Motor neuron (in vitro differentiated cells): ENCODE measurements at regions of chr10 and their contacts with region 1.

Region 1: DNA sequence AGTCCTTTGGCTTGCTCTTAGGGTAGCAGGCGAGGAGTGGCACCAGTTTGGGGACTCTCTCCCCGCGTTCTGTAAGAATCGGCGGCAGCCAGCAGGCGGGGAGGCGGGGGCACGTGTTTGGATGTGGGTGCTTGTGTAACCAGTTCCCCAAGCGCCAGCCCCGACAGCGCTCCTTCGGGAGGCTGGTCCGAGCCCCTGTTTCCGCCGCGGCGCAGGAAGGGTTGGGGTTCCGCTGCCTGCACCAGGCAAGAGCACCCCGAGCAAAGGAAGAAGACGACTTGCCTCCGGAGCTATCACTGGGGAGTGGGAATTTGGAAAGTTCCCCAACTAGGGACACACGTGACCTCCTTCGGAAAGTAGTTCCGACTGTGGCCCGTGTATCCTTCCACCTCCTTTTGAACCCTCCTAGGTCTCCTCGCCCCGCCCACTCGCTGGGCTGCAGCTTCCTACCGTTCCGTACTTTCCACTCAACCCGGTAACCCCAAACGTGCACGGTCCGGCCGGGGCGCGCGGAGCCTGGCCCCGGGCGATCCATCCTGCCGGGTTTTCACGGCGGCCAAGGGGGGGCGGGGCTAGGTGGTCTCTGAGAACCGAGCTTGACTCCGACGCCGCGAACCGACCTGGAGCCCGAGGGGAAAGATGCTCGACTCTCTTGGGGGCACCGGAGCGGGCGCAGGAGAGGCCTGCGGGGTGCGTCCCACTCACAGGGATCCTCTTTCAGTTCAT is 1.2 kb downstream of the KLLN start:
- ATAC-seq: peak; percentile 51 to 65 (median 54)
- H3K4me3 ChIP-seq: peak overlapping the region; percentile 79 to 95 (median 90)
- H3K27ac ChIP-seq: peak overlapping the region; percentile 86 to 95
- H3K4me1 ChIP-seq: peaks cover 0 to 5% of the 10 kb centered on the region in 2 donors

Region 2: DNA sequence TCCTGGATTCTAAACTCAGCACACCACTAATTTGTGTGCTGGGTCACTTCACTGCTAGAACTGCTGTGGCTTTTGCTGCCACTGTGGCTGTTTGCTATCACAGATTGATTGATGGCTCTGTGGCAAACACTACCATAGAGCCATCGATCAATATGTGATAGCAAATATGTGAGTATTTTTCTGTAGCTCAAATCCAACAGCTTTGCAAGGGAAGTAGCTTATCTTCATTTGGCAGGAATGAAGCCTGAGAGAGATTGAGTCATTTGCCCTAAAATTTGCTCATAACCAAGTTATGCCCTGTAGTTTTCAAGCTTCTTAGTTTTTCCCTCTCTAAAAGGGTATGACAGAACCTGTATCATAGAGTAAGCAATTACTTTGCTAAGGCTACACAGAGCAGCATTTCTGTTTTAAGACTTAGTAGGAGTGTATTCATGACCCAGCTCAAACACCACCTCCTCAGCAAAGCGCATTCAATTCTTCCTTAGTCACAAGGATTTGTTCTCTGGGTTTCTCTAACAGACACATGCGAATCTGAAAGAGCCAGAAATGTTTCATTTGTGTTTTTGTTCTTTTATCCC is 314.3 kb before region 1 on chr10:
- in situ Hi-C with region 1: no loop called
- ATAC-seq: no peak
- H3K4me3 ChIP-seq: no peak overlapping the region
- H3K27ac ChIP-seq: no peak overlapping the region
- H3K4me1 ChIP-seq: peaks cover 0 to 5% of the 10 kb centered on the region in 2 donors

Region 3: GRCh38 chr10:88386821-88387773 is 525.0 kb after region 1 on chr10:
- in situ Hi-C with region 1: loop called in 3 of 9 experiments (anchors 25 kb)
- ATAC-seq: peak in 6 of 8 experiments; percentile 42 to 97 (median 78)
- H3K4me3 ChIP-seq: no peak overlapping the region
- H3K27ac ChIP-seq: no peak overlapping the region
- H3K4me1 ChIP-seq: peaks cover 0 to 21% of the 10 kb centered on the region in 2 donors

Region 4: GRCh38 chr10:88525371-88526079 is 663.4 kb after region 1 on chr10:
- in situ Hi-C with region 1: loop called in 1 of 9 experiments (anchors 25 kb)
- ATAC-seq: peak in 1 of 8 experiments; percentile 32
- H3K4me3 ChIP-seq: no peak overlapping the region
- H3K27ac ChIP-seq: no peak overlapping the region
- H3K4me1 ChIP-seq: no peaks in the 10 kb centered on the region

Region 5: GRCh38 chr10:88553116-88553752 is 691.1 kb after region 1 on chr10:
- in situ Hi-C with region 1: loop called in 3 of 9 experiments (anchors 25 kb)
- ATAC-seq: peak; percentile 77 to 98 (median 90)
- H3K4me3 ChIP-seq: no peak overlapping the region
- H3K27ac ChIP-seq: no peak overlapping the region
- H3K4me1 ChIP-seq: no peaks in the 10 kb centered on the region